Esophagus muscularis mucosa (tissue), 4 donors: ENCODE measurements at regions of chr13 and their contacts with region 1.

Region 1: DNA sequence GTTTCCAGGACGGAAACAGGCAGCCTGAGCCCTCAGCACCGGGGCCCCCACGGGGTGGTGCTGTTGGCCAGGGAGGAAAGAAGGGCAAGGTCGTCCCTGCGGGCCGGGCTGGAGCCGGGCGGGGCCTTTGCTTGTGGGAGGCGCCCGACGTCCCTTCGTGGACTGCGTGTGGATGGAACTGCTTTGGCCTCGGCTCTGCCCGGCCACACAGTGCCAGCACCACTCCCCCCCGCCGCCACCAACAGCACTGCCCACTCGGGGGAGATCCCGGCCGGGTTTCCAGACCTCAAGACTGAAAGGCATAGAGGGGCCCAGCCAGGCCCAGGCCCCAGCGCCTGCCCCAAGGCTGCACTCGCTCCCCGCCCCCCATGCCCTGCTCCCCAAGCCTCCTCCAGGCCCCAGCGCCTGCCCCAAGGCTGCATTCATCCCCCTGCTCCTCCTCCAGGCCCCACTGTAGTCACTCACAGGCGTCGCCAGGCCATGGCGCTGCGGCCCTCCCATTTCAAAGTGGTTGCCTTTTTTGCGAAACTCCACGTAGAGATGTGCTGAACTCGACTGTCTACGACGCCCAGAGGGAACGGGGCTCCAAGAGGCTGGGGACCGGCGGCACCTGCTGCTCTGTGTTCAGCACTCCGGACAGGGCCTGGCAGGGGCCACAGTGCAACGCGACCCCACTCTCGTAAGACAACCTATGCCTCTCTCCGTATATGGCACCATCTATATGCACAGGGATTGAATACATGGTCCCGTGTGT is 22.5 kb downstream of the C13orf46 start:
- DNase-seq: peak; percentile 96
- H3K4me3 ChIP-seq: peak overlapping the region; percentile 7 to 46 (median 36)
- H3K27ac ChIP-seq: peak overlapping the region in 2 of 4 donors; percentile 29 to 56
- H3K4me1 ChIP-seq: peaks cover 10 to 29% (median 24%) of the 10 kb centered on the region in 4 donors
- H3K27me3 ChIP-seq: no peaks in the 10 kb centered on the region
- CTCF ChIP-seq: peak; percentile 81 to 92 (median 92)
- EP300 ChIP-seq: no peak
- POLR2A ChIP-seq: no peak

Region 2: DNA sequence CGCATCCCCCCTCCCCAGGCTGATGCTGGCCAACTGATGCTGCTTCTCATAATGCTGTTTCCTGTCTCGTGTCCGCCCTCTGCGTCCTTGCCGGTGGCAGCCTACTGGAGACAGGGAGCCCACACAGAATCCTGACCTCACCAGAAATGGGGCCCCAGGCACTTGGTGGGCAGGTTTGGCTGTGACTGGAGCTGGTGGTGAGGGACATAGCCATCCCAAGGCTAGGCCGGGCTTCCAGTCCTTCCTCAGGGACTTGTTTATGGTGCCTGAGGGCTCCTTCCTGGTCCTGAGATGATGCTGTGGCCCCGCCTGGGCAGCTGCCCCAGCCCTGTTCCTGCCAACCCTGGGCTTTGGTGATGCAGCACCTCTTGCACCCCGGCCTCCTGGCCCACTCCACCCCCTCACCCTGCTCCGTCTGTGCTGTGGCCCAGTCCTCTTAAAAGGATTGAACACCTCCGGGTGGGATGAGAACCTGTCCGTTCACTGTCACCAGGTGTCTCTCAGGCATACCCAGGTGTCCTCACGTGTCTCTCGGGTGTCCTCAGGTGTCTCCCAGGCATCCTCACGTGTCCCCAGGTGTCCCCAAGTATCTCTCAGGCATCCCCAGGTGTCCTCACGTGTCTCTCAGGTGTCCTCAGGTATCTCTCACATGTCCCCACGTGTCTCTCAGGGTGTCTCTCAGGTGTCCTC is 327.5 kb before region 1 on chr13:
- intact Hi-C with region 1: loop called (anchors 5 kb)
- DNase-seq: no peak
- H3K4me3 ChIP-seq: no peak overlapping the region
- H3K27ac ChIP-seq: no peak overlapping the region
- H3K4me1 ChIP-seq: no peaks in the 10 kb centered on the region
- H3K27me3 ChIP-seq: no peaks in the 10 kb centered on the region
- CTCF ChIP-seq: no peak
- EP300 ChIP-seq: no peak
- POLR2A ChIP-seq: no peak

Region 3: DNA sequence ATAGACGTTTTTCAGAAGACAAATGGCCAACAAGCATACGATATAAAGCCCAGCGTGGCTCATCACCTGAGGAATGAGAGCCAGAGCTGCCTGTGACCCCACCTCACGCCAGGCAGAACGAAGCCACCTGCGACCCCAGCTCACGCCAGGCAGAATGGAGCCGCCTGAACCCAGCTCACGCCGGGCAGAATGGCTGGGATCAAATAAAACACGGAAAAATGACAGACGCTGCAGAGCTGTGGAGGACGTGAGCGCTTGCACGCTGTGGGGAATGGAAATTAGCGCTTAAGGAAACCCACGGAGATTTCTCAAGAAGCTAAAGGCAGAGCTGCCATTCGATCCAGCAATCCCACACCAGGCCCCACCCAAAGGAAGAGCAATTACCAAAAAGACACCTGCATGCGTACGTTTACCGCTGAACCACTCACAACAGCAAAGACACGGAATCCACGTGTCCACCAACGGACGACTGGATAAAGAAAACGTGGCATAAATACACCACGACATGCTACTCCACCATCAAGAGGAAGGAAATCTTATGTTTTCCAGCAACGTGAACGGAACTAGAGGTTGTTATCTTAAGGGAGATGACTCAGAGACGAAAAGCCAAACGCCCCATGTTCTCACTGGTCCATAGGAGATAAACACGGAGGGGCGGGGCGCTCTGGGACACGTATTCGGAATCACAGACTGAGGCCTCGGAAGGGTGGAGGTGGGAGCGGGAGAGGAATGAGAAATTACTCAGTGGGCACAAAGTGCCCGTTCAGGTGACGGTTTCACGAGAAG is 53.2 kb after region 1 on chr13:
- intact Hi-C with region 1: no loop called
- DNase-seq: peak; percentile 94
- H3K4me3 ChIP-seq: no peak overlapping the region
- H3K27ac ChIP-seq: no peak overlapping the region
- H3K4me1 ChIP-seq: no peaks in the 10 kb centered on the region
- H3K27me3 ChIP-seq: no peaks in the 10 kb centered on the region
- CTCF ChIP-seq: no peak
- EP300 ChIP-seq: no peak
- POLR2A ChIP-seq: no peak

Region 4: GRCh38 chr13:114226699-114227323 is 275.4 kb after region 1 on chr13:
- intact Hi-C with region 1: loop called (anchors 1 kb)
- DNase-seq: peak; percentile 98
- H3K4me3 ChIP-seq: no peak overlapping the region
- H3K27ac ChIP-seq: no peak overlapping the region
- H3K4me1 ChIP-seq: peaks cover 5 to 17% (median 10%) of the 10 kb centered on the region in 4 donors
- H3K27me3 ChIP-seq: peaks cover 0 to 23% (median 3%) of the 10 kb centered on the region in 4 donors
- CTCF ChIP-seq: peak in 2 of 3 experiments; percentile 96 to 98
- EP300 ChIP-seq: no peak
- POLR2A ChIP-seq: no peak